HAP-1 (cell line): ENCODE measurements at regions of chr12 and their contacts with region 1.

Region 1: GRCh38 chr12:107131832-107132616 is 38.7 kb upstream of the CRY1 start:
- DNase-seq: peak in 1 of 2 experiments; percentile 62
- H3K4me3 ChIP-seq: no peak overlapping the region
- H3K4me1 ChIP-seq: peaks cover 27% of the 10 kb centered on the region
- H3K27me3 ChIP-seq: peaks cover 10% of the 10 kb centered on the region; the same call in 1 of the 2 replicates

Region 2: GRCh38 chr12:106934277-106934676 is 197.7 kb before region 1 on chr12:
- in situ Hi-C with region 1: no loop called
- DNase-seq: no peak
- H3K4me3 ChIP-seq: no peak overlapping the region
- H3K4me1 ChIP-seq: no peaks in the 10 kb centered on the region
- H3K27me3 ChIP-seq: 0 out of 2 replicates have a peak, but pooled peaks cover 2% of the 10 kb centered on the region

Region 3: DNA sequence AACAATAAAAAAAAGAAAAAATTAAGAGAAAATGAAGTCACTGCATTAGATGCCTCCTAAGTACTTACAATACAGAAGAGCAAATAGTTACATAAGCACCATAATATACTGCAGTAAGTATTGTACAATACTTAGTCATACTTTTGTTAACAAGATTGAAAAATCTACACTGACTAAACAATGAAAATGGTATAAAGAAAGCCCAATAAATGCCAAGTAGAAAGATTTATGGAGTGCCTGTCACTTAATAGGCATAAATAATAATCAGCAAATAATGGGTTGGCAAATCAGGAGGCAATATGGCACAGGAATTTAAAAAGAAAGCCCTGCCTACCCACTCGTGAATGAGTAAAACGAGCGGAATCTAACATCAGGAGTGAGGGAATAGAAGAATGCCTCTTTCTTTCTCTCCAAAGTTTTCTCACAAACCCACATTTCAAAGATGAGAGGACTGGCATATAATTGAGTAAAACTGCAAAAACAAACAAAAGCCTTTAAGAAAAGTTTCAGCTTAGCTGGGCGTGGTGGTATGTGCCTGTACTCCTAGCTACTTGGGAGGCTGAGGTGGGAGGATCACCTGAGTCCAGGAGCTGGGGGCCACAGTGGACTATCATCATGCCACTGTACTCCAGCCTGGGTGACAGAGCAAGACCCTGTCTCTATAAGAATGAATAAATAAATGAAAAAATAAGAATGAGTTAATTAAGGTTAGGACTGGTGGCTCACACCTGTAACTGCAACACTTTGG is 74.8 kb before region 1 on chr12:
- in situ Hi-C with region 1: no loop called
- DNase-seq: peak; percentile 28 to 78
- H3K4me3 ChIP-seq: no peak overlapping the region
- H3K4me1 ChIP-seq: peaks cover 30% of the 10 kb centered on the region
- H3K27me3 ChIP-seq: no peaks in the 10 kb centered on the region

Region 4: GRCh38 chr12:107402041-107403022 is 270.3 kb after region 1 on chr12:
- in situ Hi-C with region 1: loop called (anchors 10 kb)
- DNase-seq: peak; percentile 62 to 76
- H3K4me3 ChIP-seq: no peak overlapping the region
- H3K4me1 ChIP-seq: no peaks in the 10 kb centered on the region
- H3K27me3 ChIP-seq: no peaks in the 10 kb centered on the region